ENCODE measurements at regions of chr14 and their contacts with region 1.

Region 1: GRCh38 chr14:60164712-60165546 is at the start of gene DHRS7:
- DNase-seq: peak; percentile 70
- H3K4me3 ChIP-seq: peak within 1 kb of the TSS; percentile 87 to 100 (median 90)
- H3K27ac ChIP-seq: peak within 1 kb of the TSS; percentile 97
- H3K4me1 ChIP-seq: peaks cover 8% of the 10 kb centered on the region
- H3K27me3 ChIP-seq: no peaks in the 10 kb centered on the region
- CTCF ChIP-seq: peak; percentile 6 to 42
- total RNA-seq, gene DHRS7: 73.0 to 85.0 TPM

Region 2: GRCh38 chr14:59964251-59965007 is 200.5 kb before region 1 on chr14:
- CTCF ChIA-PET with region 1: no interaction called
- dilution Hi-C with region 1: no loop called
- in situ Hi-C with region 1: no loop called
- intact Hi-C with region 1: loop called (anchors 1 kb)
- DNase-seq: no peak
- H3K4me3 ChIP-seq: no peak overlapping the region
- H3K27ac ChIP-seq: no peak overlapping the region
- H3K4me1 ChIP-seq: no peaks in the 10 kb centered on the region
- H3K27me3 ChIP-seq: peaks cover 2% of the 10 kb centered on the region
- CTCF ChIP-seq: no peak